Posterior vena cava (tissue), 2 donors: ENCODE measurements at regions of chr18 and their contacts with region 1.

Region 1: GRCh38 chr18:58638441-58638840 is 9.6 kb upstream of the ALPK2 start:
- DNase-seq: no peak

Region 2: DNA sequence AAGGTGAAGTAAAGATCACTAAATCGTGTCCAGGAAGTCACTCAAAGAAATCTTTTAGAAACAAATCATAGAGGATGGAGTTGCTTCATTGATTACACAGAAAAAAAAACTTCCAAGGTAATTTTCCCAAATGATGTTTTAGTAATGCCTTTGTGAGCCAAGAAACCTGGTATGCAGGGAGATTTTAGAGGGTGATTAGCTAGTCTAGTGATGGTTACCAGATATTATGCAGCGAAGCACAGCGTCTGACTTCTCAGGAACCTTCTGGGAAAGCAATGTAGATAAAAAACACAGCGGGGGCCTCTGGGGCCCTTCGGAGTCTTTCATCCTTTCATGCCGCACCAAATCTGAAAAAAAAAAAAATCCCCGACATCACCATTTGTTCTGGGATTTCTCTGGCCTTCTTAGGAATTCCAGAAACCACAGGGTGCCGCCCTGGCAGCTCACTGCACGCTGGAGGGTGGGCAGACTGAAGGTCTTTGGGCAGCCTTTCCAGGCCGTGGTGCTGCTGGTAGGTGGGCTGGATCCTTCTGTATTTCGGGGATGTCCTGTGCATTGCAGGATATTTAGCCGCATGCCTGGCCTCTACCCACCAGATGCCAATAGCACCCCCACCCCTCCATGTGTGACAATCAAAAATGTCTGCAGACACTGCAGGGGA is 26.8 kb before region 1 on chr18:
- intact Hi-C with region 1: loop called in 1 of 2 experiments (anchors 1 kb)
- DNase-seq: no peak

Region 3: DNA sequence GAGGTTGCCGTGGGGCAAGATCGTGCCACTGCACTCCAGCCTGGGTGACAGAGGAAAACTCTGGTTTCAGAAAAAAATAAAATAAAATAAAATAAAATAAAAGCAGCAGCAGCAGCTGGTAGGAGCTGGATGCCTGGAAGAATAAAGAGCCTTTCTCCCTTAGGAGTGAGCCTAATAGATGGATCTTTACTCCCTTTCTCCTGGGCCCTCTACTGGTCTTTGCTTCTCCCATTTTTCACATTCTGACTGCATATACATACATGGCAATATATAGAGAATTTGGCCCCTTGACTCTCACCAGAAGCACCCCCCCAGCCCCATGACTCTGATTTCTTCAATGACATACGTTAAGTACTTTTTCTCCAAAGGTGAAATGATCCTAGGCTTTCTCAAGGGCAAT is 23.0 kb after region 1 on chr18:
- intact Hi-C with region 1: no loop called
- DNase-seq: no peak